Heart left ventricle (tissue), 16 donors: ENCODE measurements at regions of chr2 and their contacts with region 1.

Region 1: GRCh38 chr2:43086451-43087221 is 139.8 kb downstream of the ZFP36L2 start:
- DNase-seq: peak; percentile 71 to 88 (median 84)
- ATAC-seq: peak; percentile 85 to 89 (median 88)
- H3K4me3 ChIP-seq: no peak overlapping the region
- H3K27ac ChIP-seq: peak overlapping the region; percentile 74 to 96 (median 89)
- H3K4me1 ChIP-seq: peaks cover 12 to 60% (median 56%) of the 10 kb centered on the region in 12 donors
- H3K27me3 ChIP-seq: no peaks in the 10 kb centered on the region
- CTCF ChIP-seq: no peak
- POLR2A ChIP-seq: no peak

Region 2: DNA sequence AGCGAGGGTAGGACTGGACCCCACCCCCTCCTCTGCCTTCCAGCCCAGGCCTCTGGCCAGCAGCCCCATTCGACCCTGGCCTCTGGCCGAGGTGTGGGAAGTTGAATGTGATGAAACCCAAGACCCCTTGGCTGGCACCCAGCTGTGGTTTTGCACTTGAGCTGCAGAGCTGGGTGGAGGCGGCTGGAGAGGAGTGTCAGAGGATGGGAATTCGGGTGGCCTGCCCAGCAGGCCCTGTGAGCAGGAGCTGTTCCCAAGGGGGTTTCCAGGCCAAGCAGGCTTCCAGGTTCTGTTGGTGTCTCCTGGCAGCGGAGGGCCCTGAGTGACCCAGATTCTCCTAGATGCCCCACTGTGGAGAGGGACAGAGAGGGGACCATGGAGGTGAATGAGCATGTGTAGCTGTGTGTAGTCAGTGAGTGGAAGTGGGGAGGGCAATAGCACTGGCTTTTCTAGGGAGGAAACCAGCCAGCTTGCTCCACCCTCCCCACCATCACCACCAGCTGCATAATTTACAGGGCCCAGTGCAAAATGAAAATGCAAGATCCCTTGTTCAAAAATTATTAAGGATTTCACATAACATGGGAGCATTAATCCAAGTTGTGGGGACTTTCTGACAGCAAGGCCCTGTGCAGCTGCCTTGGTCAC is 122.1 kb before region 1 on chr2:
- intact Hi-C with region 1: loop called in 1 of 10 experiments (anchors 5 kb)
- DNase-seq: peak; percentile 68 to 91 (median 89)
- ATAC-seq: peak in 2 of 4 donors; percentile 58 to 66
- H3K4me3 ChIP-seq: no peak overlapping the region
- H3K27ac ChIP-seq: peak overlapping the region in 10 of 12 donors; percentile 4 to 91 (median 50)
- H3K4me1 ChIP-seq: peaks cover 2 to 80% (median 51%) of the 10 kb centered on the region in 12 donors
- H3K27me3 ChIP-seq: no peaks in the 10 kb centered on the region
- CTCF ChIP-seq: no peak
- POLR2A ChIP-seq: no peak

Region 3: DNA sequence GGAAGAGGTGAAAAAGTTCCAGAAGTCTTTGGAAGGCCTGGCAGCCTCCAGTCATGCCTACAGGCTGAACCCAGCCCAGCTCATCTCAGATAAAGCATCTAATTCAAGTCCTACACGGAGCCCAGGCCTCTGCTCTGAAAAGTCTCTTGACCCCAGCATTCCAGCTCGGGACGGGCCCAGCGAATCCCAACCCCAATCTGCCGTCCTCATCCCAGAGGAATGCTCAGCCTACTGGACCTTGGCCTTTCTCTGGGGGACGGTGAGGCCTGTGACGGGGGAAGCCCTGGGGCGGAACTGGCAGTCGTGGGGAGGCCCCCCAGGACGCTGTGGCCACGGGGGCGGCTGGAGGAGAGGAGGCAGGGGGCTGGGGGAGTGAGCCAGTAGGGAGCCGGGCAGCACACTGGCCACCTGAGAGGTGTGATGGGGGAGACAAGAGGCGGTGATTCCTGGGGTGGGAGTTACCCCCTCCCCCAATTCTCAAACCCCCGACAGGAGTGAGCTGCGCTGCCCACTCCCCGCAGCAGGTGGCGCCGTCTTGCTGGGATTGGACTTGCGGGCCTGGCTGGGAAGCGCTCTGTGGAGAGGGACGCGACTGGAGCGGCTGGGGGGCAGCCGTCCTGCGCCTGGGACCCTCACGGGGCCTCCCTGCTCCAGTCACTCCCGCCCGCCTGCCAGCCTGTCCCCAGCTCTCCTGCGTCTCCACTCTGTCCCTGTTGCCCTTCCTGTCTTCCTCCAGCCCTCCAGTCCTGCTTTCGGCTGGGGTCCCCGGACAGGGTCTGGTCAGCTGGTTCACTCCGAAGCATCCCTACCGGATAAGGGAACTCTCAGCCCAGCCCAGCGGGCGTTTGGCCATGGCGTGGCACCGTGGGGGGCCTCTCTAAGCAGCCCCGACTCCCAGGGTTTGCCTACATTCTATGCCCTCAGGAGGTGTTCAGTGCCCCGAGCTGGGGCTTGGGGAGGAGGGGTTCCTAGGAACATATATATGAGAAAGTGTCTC is 111.6 kb before region 1 on chr2:
- intact Hi-C with region 1: no loop called
- DNase-seq: peak; percentile 74 to 90 (median 79)
- ATAC-seq: peak; percentile 57 to 91 (median 87)
- H3K4me3 ChIP-seq: peak overlapping the region in 11 of 12 donors; percentile 7 to 59 (median 48)
- H3K27ac ChIP-seq: peak overlapping the region in 10 of 12 donors; percentile 22 to 83 (median 48)
- H3K4me1 ChIP-seq: peaks cover 0 to 23% (median 12%) of the 10 kb centered on the region in 12 donors
- H3K27me3 ChIP-seq: no peaks in the 10 kb centered on the region
- CTCF ChIP-seq: peak; percentile 72 to 95 (median 89)
- POLR2A ChIP-seq: no peak

Region 4: GRCh38 chr2:43105586-43106558 is 19.2 kb after region 1 on chr2:
- intact Hi-C with region 1: loop called in 1 of 10 experiments (anchors 2 kb)
- DNase-seq: peak; percentile 65 to 83 (median 69)
- ATAC-seq: peak; percentile 33 to 64 (median 56)
- H3K4me3 ChIP-seq: no peak overlapping the region
- H3K27ac ChIP-seq: peak overlapping the region; percentile 38 to 90 (median 72)
- H3K4me1 ChIP-seq: peaks cover 0 to 91% (median 41%) of the 10 kb centered on the region in 12 donors
- H3K27me3 ChIP-seq: no peaks in the 10 kb centered on the region
- CTCF ChIP-seq: peak in 8 of 12 donors; percentile 8 to 44 (median 29)
- POLR2A ChIP-seq: no peak